Activated B cell treated with CpG ODN at 0.5 μM for 24 hours (primary cell): ENCODE measurements at regions of chr9 and their contacts with region 1.

Region 1: GRCh38 chr9:73009649-73010288 is 56.9 kb upstream of the ALDH1A1 start:
- DNase-seq: no peak
- ATAC-seq: no peak
- H3K4me3 Mint-ChIP-seq: no peak overlapping the region
- H3K27ac Mint-ChIP-seq: no peak overlapping the region
- H3K4me1 Mint-ChIP-seq: no peaks in the 10 kb centered on the region
- H3K27me3 Mint-ChIP-seq: peaks cover 19% of the 10 kb centered on the region
- CTCF ChIP-seq: no peak

Region 2: DNA sequence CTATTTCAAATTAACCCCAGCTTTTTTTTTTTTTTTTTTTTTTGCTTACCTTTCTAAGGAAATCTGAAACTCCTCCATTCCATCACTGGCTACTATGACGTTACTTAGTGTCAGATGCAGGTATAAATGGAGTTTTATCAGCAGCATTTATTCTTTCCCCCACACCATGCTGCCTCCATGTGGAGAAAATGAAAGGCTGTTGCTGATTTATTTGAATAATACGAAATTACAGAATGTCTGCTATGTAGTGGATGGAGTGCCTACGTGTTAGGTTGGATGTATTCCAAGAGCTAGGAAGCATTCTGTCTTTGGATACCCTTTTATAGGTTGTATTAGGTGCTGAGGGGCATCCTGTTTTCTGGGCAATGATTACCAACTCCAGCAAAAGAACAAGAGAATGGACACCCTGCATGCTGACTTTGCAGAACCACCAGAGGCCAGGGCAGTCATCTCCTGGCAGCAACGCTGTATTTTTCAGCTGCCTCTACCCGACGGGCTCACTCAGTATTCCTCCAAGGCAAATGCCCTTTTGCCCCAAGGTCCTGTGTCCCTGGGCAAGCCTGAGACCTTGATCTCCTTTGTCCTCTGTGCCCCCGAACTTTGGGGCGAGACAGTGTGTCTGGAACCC is 256.4 kb before region 1 on chr9:
- CTCF ChIA-PET with region 1: no interaction called
- POLR2A ChIA-PET with region 1: no interaction called
- intact Hi-C with region 1: no loop called
- DNase-seq: no peak
- ATAC-seq: no peak
- H3K4me3 Mint-ChIP-seq: no peak overlapping the region
- H3K27ac Mint-ChIP-seq: no peak overlapping the region
- H3K4me1 Mint-ChIP-seq: no peaks in the 10 kb centered on the region
- H3K27me3 Mint-ChIP-seq: no peaks in the 10 kb centered on the region
- CTCF ChIP-seq: no peak

Region 3: GRCh38 chr9:73023025-73023541 is 13.3 kb after region 1 on chr9:
- CTCF ChIA-PET with region 1: interaction called, 10 read pairs
- POLR2A ChIA-PET with region 1: no interaction called
- intact Hi-C with region 1: no loop called
- DNase-seq: no peak
- ATAC-seq: no peak
- H3K4me3 Mint-ChIP-seq: no peak overlapping the region
- H3K27ac Mint-ChIP-seq: no peak overlapping the region
- H3K4me1 Mint-ChIP-seq: peaks cover 42% of the 10 kb centered on the region
- H3K27me3 Mint-ChIP-seq: peaks cover 3% of the 10 kb centered on the region
- CTCF ChIP-seq: peak; percentile 39

Region 4: GRCh38 chr9:73348471-73348870 is 338.7 kb after region 1 on chr9:
- CTCF ChIA-PET with region 1: no interaction called
- POLR2A ChIA-PET with region 1: no interaction called
- intact Hi-C with region 1: no loop called
- DNase-seq: no peak
- ATAC-seq: no peak
- H3K4me3 Mint-ChIP-seq: no peak overlapping the region
- H3K27ac Mint-ChIP-seq: no peak overlapping the region
- H3K4me1 Mint-ChIP-seq: no peaks in the 10 kb centered on the region
- H3K27me3 Mint-ChIP-seq: no peaks in the 10 kb centered on the region
- CTCF ChIP-seq: no peak